ENCODE measurements at regions of chr7 and their contacts with region 1.

Region 1: GRCh38 chr7:102912742-102913141 is at the start of gene LRRC17:
- DNase-seq: peak in 1 of 2 donors; percentile 64
- ATAC-seq: peak in 7 of 8 donors; percentile 34 to 78 (median 60)
- H3K4me3 ChIP-seq: peak within 1 kb of the TSS in 9 of 10 donors; percentile 8 to 52 (median 46)
- H3K27ac ChIP-seq: peak within 1 kb of the TSS; percentile 0 to 72 (median 55)
- H3K4me1 ChIP-seq: peaks cover 0 to 28% (median 9%) of the 10 kb centered on the region in 9 donors
- H3K27me3 ChIP-seq: no peaks in the 10 kb centered on the region
- CTCF ChIP-seq: no peak
- total RNA-seq, gene LRRC17: 0.12 to 9.5 (median 2.6) TPM

Region 2: DNA sequence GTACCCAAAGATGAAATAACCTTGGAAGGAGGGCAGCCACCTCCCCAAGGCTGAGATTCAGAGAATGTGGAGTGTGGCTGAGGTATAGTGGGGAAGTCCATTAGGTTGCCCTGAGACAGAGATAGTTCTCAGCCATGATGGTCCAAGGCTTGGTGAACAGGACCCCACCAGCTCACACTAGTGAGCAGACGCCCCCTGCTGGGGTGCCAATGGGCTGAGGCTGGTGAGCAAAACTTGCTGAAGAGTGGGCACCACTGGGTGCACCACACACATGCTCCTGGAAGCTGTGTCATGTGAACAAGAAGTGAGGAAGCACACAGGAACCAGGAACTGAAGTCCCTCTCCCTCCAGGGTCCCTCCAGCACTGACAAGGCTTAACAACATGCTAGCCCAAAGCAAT is 152.9 kb after region 1 on chr7:
- intact Hi-C with region 1: loop called in 1 of 10 experiments (anchors 10 kb)
- DNase-seq: peak in 1 of 2 donors; percentile 21
- ATAC-seq: peak in 4 of 8 donors; percentile 29 to 48 (median 38)
- H3K4me3 ChIP-seq: no peak overlapping the region
- H3K27ac ChIP-seq: no peak overlapping the region
- H3K4me1 ChIP-seq: no peaks in the 10 kb centered on the region
- H3K27me3 ChIP-seq: no peaks in the 10 kb centered on the region
- CTCF ChIP-seq: peak in 7 of 9 donors; percentile 35 to 56 (median 43)